Lower leg skin (tissue), 4 donors: ENCODE measurements at regions of chr3 and their contacts with region 1.

Region 1: DNA sequence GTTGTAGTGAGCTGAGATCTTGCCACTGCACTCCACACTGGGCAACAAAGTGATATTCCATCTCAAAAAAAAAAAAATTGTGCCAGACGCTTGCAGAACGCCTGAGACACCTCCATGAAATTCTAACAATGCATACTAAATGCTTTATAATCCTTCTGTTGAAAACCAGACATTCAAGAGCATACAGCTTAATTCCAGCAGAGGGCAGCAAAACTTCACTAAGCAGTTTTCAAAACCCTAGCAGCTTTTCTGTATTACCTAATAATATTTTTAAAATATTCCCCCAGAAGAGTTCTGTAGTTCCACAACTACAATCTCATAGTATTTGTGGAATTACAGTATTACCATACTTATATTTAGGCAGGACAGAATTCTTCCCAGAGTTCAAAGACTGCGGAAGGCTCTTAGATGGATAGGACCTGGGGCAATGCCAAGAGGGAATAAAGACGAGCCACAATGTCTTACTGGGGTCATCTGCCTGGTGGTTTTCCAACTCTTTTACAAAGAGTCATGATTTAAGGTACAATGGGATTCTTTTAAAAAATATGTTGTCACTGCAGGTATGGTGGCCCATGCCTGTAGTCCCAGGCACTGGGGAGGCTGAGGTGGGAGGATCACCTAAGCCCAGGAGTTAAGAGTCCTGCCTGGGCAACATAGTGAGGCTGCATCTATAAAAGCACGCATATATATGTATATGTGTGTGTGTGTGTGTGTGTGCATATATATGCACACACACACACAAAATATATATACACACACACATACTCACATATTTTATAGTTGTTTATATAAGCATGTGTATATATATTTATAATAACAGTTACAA is 19.6 kb upstream of the TASOR start:
- DNase-seq: peak in 1 of 2 donors; percentile 54
- H3K4me3 ChIP-seq: no peak overlapping the region
- CTCF ChIP-seq: peak in 1 of 3 donors; percentile 86
- POLR2A ChIP-seq: no peak

Region 2: DNA sequence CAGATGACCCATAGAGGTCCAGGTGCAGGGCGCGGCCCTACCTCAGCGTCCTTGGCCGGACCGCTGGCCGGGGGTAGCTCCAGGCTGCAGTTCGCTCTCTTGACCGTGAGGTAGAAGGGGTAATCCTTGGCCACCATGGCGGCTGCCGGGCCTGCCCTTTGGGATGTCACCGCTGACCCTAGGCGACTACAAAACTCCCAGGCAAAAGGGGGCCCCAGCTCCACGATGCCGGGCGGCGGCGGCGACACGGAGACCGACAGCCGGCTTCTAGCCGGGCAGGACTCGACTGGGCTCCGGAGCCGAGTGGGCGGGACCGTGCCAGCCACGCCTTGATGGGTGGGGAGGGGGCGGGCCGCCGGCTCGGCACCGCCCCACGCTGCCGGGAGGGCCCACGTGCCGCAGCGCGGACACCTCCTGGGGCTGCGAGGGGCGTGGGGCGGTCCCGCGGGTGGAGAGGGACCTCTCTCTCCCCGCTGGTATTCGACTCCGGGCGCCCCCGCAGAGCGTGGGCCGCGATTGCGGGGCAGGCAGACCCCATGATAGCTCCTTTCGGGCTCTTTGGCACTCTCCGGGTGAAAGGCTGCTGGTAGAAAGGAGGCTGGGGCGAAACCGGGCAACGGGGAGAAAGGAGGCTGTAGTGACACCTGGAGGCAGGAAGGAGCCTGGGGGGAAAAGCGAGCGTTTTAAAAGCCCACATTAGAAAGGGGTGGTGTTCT is 99.1 kb after region 1 on chr3 and contains the start of gene ARHGEF3:
- intact Hi-C with region 1: loop called (anchors 5 kb)
- DNase-seq: peak; percentile 70 to 96
- H3K4me3 ChIP-seq: peak within 1 kb of the TSS; percentile 53
- CTCF ChIP-seq: no peak
- POLR2A ChIP-seq: no peak
- total RNA-seq, gene ARHGEF3: 13.3 to 28.5 (median 19.1) TPM

Region 3: DNA sequence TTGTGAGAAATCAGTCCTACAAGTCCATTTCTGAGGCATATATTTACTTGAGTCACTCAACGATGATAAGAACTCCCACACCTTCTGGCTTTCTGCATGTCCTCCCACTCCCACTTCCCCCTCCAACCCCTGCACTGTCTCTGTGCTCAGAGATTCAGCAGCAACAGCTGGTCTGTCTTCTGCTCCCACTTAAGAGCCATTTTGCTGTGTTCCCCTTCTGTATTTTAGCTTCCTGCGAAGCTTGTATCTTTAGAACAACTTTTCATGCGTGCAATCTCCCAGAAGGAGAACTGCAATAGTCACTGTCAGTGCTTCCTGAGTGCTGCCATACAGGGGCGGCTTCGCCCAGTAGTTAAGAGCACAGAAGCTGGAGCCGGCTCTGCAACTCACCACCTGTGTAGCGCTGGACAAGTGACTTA is 267.8 kb after region 1 on chr3:
- intact Hi-C with region 1: loop called (anchors 5 kb)
- DNase-seq: no peak
- H3K4me3 ChIP-seq: no peak overlapping the region
- CTCF ChIP-seq: no peak
- POLR2A ChIP-seq: no peak